Activated CD4-positive, alpha-beta memory T cell treated with anti-CD3 and anti-CD28 coated beads for 36 hours (primary cell): ENCODE measurements at regions of chr4 and their contacts with region 1.

Region 1: DNA sequence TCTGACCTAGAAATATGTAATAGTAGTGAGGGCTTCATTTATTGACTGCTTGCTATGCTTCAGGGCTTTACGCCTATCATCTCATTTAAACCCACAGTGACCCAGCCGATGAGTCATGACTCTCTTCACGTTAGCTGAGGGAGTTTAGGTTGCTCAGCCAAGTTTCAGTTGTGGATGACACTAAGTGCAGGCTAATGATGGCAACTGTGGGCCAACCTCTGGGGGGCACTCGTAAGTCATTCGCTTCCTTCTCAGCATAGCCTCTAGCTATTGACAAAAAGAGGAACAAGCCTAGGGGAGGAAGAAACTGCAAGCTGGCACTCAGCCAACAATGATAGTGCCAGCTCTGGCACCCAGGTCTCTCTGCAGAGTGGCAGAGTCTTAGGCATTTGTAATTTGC is 325.0 kb downstream of the ARHGAP10 start:
- DNase-seq: peak; percentile 85
- H3K4me3 Mint-ChIP-seq: no peak overlapping the region
- H3K27ac Mint-ChIP-seq: peak overlapping the region; percentile 53
- H3K4me1 Mint-ChIP-seq: peaks cover 77% of the 10 kb centered on the region
- H3K27me3 Mint-ChIP-seq: no peaks in the 10 kb centered on the region

Region 2: DNA sequence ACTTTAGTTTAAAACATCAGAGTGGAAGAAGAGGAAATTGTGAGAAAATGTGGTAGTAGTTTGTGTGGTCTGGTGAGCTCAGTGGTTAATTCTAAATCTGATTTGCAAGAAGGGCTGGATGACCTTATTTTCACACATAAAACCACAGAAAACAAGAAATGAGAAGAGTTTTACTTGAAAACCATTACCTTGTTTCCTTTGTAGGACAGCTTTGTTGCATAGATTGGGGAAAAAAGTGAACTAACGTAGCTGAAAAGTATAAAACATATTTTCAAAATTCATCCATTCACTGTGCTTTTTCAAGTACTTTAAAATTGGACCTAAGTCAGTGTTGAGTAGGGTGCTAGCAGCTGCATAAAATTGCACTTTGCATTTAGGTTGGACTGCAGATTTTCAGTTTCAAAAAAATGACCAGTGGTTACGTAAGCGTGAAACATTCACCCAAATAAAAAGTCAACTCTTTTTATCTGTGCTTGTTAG is 113.7 kb before region 1 on chr4:
- CTCF ChIA-PET with region 1: interaction called, 7 read pairs
- POLR2A ChIA-PET with region 1: no interaction called
- intact Hi-C with region 1: loop called (anchors 5 kb)
- DNase-seq: no peak
- H3K4me3 Mint-ChIP-seq: no peak overlapping the region
- H3K27ac Mint-ChIP-seq: peak overlapping the region; percentile 2
- H3K4me1 Mint-ChIP-seq: peaks cover 26% of the 10 kb centered on the region
- H3K27me3 Mint-ChIP-seq: no peaks in the 10 kb centered on the region

Region 3: GRCh38 chr4:148112231-148112982 is 55.5 kb after region 1 on chr4:
- CTCF ChIA-PET with region 1: no interaction called
- POLR2A ChIA-PET with region 1: no interaction called
- intact Hi-C with region 1: loop called (anchors 5 kb)
- DNase-seq: no peak
- H3K4me3 Mint-ChIP-seq: no peak overlapping the region
- H3K27ac Mint-ChIP-seq: no peak overlapping the region
- H3K4me1 Mint-ChIP-seq: peaks cover 23% of the 10 kb centered on the region
- H3K27me3 Mint-ChIP-seq: no peaks in the 10 kb centered on the region

Region 4: GRCh38 chr4:148216866-148217814 is 160.3 kb after region 1 on chr4:
- CTCF ChIA-PET with region 1: no interaction called
- POLR2A ChIA-PET with region 1: no interaction called
- intact Hi-C with region 1: loop called (anchors 2 kb)
- DNase-seq: peak; percentile 34
- H3K4me3 Mint-ChIP-seq: peak overlapping the region; percentile 65
- H3K27ac Mint-ChIP-seq: peak overlapping the region; percentile 70
- H3K4me1 Mint-ChIP-seq: peaks cover 27% of the 10 kb centered on the region
- H3K27me3 Mint-ChIP-seq: no peaks in the 10 kb centered on the region

Region 5: DNA sequence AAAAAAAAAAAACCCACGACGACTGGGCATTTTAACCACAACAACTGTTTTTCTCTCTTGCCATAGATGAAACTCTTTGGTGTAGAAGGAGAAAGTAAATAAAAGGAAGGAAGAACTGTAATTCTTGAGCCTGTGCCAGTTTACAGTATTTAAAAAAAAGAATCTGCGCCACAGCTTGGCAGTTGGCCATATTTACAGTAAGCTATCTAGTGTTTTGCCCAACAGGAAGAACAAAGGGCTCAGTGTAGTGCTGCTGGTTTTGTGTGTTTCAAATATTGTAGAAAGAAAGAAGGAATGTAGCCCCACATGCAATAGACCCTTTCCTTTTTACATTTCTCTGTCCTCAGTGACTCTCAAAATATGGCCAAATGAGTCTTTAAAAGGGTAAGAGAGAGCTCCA is 319.3 kb after region 1 on chr4:
- CTCF ChIA-PET with region 1: no interaction called
- POLR2A ChIA-PET with region 1: no interaction called
- intact Hi-C with region 1: loop called (anchors 10 kb)
- DNase-seq: peak; percentile 32
- H3K4me3 Mint-ChIP-seq: peak overlapping the region; percentile 61
- H3K27ac Mint-ChIP-seq: peak overlapping the region; percentile 77
- H3K4me1 Mint-ChIP-seq: peaks cover 28% of the 10 kb centered on the region
- H3K27me3 Mint-ChIP-seq: no peaks in the 10 kb centered on the region

Region 6: DNA sequence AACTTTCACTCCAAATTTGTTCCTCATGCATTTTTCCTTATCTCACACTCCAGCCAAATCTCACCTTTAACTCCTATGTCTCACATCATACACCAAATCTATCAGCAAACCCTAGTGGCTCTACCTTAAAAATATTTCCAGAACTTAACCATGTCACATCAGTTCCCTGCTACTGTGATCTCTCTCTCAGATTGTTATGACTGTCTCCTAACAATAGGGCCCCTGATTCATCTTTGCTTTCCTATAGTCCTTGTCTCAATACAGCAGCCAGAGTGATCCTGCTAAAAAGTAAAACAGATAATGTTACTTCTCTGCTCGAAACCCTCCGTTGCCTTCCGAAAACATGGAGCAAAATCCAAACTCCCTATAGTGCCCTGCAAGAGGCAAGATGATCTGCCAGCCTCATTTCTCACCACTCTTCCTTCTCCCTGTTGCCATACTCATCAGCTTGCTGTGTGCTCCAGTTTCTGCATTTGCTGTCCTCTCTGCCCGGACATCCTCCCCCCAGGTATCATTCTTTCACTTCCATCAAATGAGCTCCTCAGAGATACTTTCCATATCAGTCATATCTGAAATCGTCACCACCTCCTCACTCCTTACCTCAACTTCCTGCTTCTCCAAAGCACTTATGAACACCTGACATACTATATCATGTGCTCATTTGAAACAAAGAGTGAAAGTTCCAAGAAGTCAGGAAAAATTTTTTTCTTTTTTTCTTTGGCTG is 678.7 kb after region 1 on chr4:
- CTCF ChIA-PET with region 1: no interaction called
- POLR2A ChIA-PET with region 1: no interaction called
- intact Hi-C with region 1: loop called (anchors 2 kb)
- DNase-seq: peak; percentile 37
- H3K4me3 Mint-ChIP-seq: no peak overlapping the region
- H3K27ac Mint-ChIP-seq: no peak overlapping the region
- H3K4me1 Mint-ChIP-seq: no peaks in the 10 kb centered on the region
- H3K27me3 Mint-ChIP-seq: peaks cover 2% of the 10 kb centered on the region